ENCODE measurements at regions of chr12 and their contacts with region 1.

Region 1: DNA sequence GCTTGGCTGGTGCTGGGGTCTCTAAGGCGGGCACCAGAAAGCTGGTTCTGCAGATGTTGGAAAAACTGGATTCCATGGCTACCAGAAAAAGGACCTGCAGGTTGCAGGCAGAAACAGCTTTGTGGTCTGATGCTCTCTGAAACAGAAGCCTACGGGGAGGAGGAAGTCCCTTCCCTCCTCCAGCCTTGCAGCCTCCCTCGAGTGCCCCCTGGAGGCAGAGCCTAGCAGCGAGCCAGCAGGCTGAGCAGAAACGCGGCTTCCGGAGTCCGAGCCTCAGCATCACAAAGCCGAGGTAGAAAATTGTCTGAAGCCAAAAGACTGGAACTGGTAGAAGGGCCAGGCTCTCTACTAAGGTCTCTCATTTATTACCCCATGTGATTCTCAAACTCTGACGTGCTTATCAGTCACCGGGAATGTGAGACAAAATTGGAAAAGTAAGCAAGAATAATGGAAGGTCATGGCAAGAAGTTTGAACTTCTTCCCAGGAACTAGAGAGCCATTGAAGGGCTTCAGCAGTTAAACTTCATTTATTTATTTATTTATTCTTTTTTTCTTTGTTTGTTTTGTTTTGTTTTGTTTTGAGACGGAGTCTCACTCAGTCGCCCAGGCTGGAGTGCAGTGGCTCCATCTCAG is 82.2 kb upstream of the CPSF6 start:
- DNase-seq: peak; percentile 67
- H3K4me3 ChIP-seq: no peak overlapping the region
- H3K27ac ChIP-seq: no peak overlapping the region
- H3K4me1 ChIP-seq: no peaks in the 10 kb centered on the region
- H3K27me3 ChIP-seq: peaks cover 1 to 2% of the 10 kb centered on the region in 2 experiments
- CTCF ChIP-seq: peak; percentile 96 to 99
- POLR2A ChIP-seq: no peak

Region 2: DNA sequence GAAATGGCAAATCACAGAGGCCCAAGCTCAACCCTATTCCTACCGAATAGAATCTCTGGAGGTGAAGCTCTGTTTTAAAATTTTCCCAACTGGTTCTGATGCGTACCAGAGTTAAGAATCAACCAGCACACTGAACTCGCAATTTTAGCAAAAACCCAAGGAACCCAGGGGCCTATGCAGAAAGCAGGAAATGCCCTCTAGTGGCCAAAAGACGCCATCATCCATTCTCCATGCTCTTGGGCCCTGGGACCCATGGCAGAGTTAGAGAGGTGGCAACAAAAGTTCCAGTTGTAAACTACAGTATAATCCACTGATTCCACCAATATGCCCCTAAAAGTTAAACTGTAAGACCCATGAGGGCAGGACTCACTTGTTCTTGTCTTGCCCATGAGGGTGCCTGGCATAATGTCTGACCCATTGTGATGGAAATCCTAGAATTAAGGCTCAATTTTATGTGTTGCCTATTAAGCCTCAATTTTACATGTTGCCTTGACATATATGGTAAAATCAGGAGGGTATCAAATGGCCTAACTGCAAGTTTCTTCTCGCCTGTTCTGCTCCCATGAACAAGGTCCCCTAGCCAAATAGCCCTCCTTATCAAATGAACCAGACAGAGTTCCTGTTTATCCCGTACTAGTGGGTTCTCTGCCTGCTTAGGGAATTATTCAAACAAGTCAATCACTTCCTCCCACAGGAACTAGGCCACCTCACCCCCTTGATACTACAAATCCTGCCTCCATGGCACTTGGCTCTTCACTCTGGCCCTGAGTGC is 86.6 kb before region 1 on chr12:
- CTCF ChIA-PET with region 1: interaction called, 4 read pairs
- POLR2A ChIA-PET with region 1: no interaction called
- dilution Hi-C with region 1: no loop called
- intact Hi-C with region 1: loop called (anchors 1 kb)
- DNase-seq: peak; percentile 80
- H3K4me3 ChIP-seq: no peak overlapping the region
- H3K27ac ChIP-seq: no peak overlapping the region
- H3K4me1 ChIP-seq: peaks cover 26% of the 10 kb centered on the region
- H3K27me3 ChIP-seq: peaks cover 23 to 50% of the 10 kb centered on the region in 2 experiments
- CTCF ChIP-seq: peak; percentile 81 to 82
- POLR2A ChIP-seq: no peak

Region 3: GRCh38 chr12:69141074-69141473 is 16.1 kb before region 1 on chr12:
- CTCF ChIA-PET with region 1: interaction called, 13 read pairs
- POLR2A ChIA-PET with region 1: no interaction called
- dilution Hi-C with region 1: no loop called
- intact Hi-C with region 1: no loop called
- DNase-seq: no peak
- H3K4me3 ChIP-seq: no peak overlapping the region
- H3K27ac ChIP-seq: no peak overlapping the region
- H3K4me1 ChIP-seq: no peaks in the 10 kb centered on the region
- H3K27me3 ChIP-seq: no peaks in the 10 kb centered on the region
- CTCF ChIP-seq: no peak
- POLR2A ChIP-seq: no peak

Region 4: GRCh38 chr12:69254046-69254445 is 96.9 kb after region 1 on chr12:
- CTCF ChIA-PET with region 1: interaction called, 75 read pairs
- POLR2A ChIA-PET with region 1: no interaction called
- dilution Hi-C with region 1: no loop called
- intact Hi-C with region 1: loop called (anchors 1 kb)
- DNase-seq: peak; percentile 84
- H3K4me3 ChIP-seq: no peak overlapping the region
- H3K27ac ChIP-seq: peak overlapping the region; percentile 71
- H3K4me1 ChIP-seq: peaks cover 5% of the 10 kb centered on the region
- H3K27me3 ChIP-seq: no peaks in the 10 kb centered on the region
- CTCF ChIP-seq: peak; percentile 45 to 50
- POLR2A ChIP-seq: no peak